ENCODE measurements at regions of chr6 and their contacts with region 1.

Region 1: GRCh38 chr6:119742188-119742803 is 392.7 kb upstream of the MAN1A1 start:
- DNase-seq: peak; percentile 2 to 49 (median 22)
- ATAC-seq: peak; percentile 76
- H3K4me3 ChIP-seq: no peak overlapping the region
- H3K4me3 Mint-ChIP-seq: no peak overlapping the region
- H3K27ac ChIP-seq: no peak overlapping the region
- H3K27ac Mint-ChIP-seq: no peak overlapping the region
- H3K4me1 ChIP-seq: no peaks in the 10 kb centered on the region
- H3K4me1 Mint-ChIP-seq: peaks cover 0 to 6% (median 0%) of the 10 kb centered on the region in 7 donors
- H3K27me3 ChIP-seq: no peaks in the 10 kb centered on the region
- H3K27me3 Mint-ChIP-seq: peaks cover 0 to 27% (median 10%) of the 10 kb centered on the region in 5 donors

Region 2: DNA sequence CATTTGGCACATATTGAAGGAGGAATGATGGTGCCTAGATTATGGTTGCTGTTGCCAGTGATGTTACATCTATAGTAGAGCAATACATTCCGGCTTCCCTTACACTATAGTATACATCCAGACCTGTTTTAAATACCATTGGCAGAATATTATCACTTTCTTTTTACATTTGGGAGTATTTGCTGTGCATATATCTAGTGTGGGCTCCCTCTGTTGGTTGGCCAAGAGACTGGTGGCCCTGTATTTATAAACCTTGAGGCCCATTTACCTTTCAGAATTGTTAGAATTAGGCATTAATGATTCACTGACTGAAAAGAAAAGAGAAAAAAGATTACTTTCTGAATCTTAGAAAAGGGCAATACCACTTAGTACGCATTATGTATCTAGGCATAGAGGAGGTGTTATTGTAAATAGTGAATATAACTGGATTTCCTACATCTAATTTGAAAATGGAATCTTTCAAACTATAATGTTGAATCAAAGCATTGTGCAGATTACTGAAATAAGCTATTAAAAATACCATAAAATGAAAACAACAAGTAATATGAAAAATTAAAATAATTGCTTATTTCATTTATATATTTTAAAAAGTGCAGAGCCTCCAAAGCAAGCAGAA is 236.1 kb after region 1 on chr6:
- CTCF ChIA-PET with region 1: no interaction called
- POLR2A ChIA-PET with region 1: no interaction called
- intact Hi-C with region 1: loop called in 1 of 2 experiments (anchors 5 kb)
- DNase-seq: no peak
- ATAC-seq: no peak
- H3K4me3 ChIP-seq: no peak overlapping the region
- H3K4me3 Mint-ChIP-seq: no peak overlapping the region
- H3K27ac ChIP-seq: no peak overlapping the region
- H3K27ac Mint-ChIP-seq: no peak overlapping the region
- H3K4me1 ChIP-seq: no peaks in the 10 kb centered on the region
- H3K4me1 Mint-ChIP-seq: peaks cover 0 to 4% (median 0%) of the 10 kb centered on the region in 7 donors
- H3K27me3 ChIP-seq: no peaks in the 10 kb centered on the region
- H3K27me3 Mint-ChIP-seq: no peaks in the 10 kb centered on the region

Region 3: DNA sequence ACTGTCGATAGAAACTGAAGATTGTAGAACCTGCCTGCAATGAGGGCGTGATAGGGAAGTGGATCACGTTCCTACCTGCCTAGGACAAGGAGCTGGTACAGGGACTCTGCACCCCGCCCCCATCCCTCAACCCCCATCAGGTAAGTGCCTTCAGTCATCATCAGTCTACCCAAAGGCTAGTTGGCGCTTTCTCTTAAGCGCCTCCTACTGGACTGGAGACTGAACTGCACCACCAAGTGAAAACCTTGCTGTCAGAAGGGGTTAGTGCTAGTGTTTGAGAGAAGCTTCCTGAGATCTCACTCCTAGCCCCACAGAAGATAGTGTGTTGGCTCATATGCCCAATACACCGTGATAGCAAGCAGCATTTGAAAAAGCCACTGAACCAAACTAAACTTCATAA is 313.8 kb after region 1 on chr6:
- CTCF ChIA-PET with region 1: no interaction called
- POLR2A ChIA-PET with region 1: no interaction called
- intact Hi-C with region 1: loop called in 1 of 2 experiments (anchors 5 kb)
- DNase-seq: no peak
- ATAC-seq: no peak
- H3K4me3 ChIP-seq: no peak overlapping the region
- H3K4me3 Mint-ChIP-seq: no peak overlapping the region
- H3K27ac ChIP-seq: no peak overlapping the region
- H3K27ac Mint-ChIP-seq: no peak overlapping the region
- H3K4me1 ChIP-seq: no peaks in the 10 kb centered on the region
- H3K4me1 Mint-ChIP-seq: no peaks in the 10 kb centered on the region
- H3K27me3 ChIP-seq: no peaks in the 10 kb centered on the region
- H3K27me3 Mint-ChIP-seq: peaks cover 0 to 5% (median 0%) of the 10 kb centered on the region in 5 donors

Region 4: DNA sequence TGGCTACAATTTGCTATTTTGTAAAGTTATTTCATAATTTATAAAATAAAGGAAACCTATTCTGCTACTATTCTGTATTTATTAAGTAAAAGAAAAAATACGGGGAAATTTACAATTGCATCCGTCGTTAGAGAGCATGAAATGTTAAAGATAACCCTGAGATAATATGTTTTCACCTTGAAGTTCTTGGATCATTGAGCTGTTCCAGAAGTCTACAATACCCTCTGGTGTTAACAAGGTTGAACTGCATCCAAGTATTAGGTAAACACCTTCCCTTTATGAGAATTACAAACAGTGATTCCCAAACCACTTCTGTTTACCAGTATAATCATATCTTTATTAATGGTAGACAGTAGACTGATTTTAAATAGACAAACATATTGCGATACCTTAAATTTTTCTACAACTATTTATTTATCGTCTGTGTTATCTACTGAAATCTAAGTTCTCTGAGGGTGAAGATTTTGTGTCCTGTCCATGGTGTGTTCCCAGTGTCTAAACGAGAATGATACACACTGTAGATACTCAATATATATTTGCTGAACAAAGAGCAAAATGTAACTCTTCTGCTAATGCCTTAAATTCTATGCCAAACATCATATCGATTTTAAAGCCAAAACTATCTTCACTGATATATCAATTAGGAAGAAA is 1563.8 kb after region 1 on chr6:
- CTCF ChIA-PET with region 1: no interaction called
- POLR2A ChIA-PET with region 1: no interaction called
- intact Hi-C with region 1: loop called (anchors 5 kb)
- DNase-seq: peak in 5 of 9 donors; percentile 2 to 14 (median 6)
- ATAC-seq: peak; percentile 62
- H3K4me3 ChIP-seq: no peak overlapping the region
- H3K4me3 Mint-ChIP-seq: no peak overlapping the region
- H3K27ac ChIP-seq: no peak overlapping the region
- H3K27ac Mint-ChIP-seq: peak overlapping the region in 1 of 9 donors; percentile 54
- H3K4me1 ChIP-seq: no peaks in the 10 kb centered on the region
- H3K4me1 Mint-ChIP-seq: peaks cover 0 to 7% (median 0%) of the 10 kb centered on the region in 7 donors
- H3K27me3 ChIP-seq: no peaks in the 10 kb centered on the region
- H3K27me3 Mint-ChIP-seq: no peaks in the 10 kb centered on the region